ENCODE measurements at regions of chr21 and their contacts with region 1.

Region 1: GRCh38 chr21:24895885-24896734 is 711.2 kb downstream of the MRPL39 start:
- DNase-seq: no peak
- ATAC-seq: no peak

Region 2: DNA sequence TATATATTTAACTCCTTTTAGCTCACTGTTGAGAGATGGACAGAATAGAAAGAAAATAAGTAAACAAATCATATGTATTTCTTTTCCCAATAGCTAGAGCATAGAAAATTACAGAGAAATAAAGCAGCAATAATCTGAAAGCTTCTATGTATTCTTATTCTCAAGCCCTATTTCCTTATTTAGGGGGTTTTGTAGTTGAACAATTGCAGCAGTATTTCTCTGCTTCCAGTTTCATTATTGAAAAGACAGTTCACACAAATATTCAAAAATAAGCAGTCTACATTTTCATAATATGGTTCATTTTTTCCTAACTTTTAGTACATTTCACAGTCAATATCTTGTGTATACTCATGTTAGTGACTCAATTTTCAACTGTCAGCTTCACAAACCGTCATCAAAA is 73.0 kb after region 1 on chr21:
- intact Hi-C with region 1: no loop called
- DNase-seq: no peak
- ATAC-seq: no peak

Region 3: DNA sequence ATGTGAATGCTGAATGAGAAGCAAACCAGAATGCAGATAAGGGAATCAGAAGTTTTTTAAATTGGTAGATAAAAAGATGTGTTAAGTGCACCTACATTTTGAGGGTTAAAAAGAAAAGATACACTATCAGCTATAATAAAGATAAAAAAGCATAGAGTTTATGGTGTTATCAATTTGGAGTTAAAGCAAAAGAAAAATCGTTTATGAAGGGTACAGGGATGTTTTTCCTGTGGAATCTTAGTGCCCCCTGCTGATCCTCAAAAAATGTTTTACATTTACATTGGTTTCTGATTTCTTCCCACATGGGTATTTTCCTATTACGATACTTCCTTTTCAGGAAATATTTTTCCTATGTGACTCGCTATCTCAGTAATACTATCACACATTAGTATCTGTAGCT is 417.7 kb after region 1 on chr21:
- intact Hi-C with region 1: loop called (anchors 1 to 5 kb)
- DNase-seq: no peak
- ATAC-seq: no peak

Region 4: GRCh38 chr21:25385911-25386474 is 489.9 kb after region 1 on chr21:
- intact Hi-C with region 1: loop called in 1 of 2 experiments (anchors 5 kb)
- DNase-seq: no peak
- ATAC-seq: peak; percentile 15 to 48

Measured in left cardiac atrium (tissue), 4 donors.